ENCODE measurements at regions of chr17 and their contacts with region 1.

Region 1: GRCh38 chr17:66567234-66568170 is 265.1 kb downstream of the PRKCA start:
- DNase-seq: peak; percentile 87
- H3K4me3 Mint-ChIP-seq: no peak overlapping the region
- H3K27ac Mint-ChIP-seq: no peak overlapping the region
- H3K4me1 Mint-ChIP-seq: peaks cover 40% of the 10 kb centered on the region
- H3K27me3 Mint-ChIP-seq: no peaks in the 10 kb centered on the region

Region 2: GRCh38 chr17:66255112-66255511 is 312.4 kb before region 1 on chr17:
- CTCF ChIA-PET with region 1: interaction called, 21 read pairs
- POLR2A ChIA-PET with region 1: no interaction called
- intact Hi-C with region 1: loop called (anchors 1 kb)
- DNase-seq: peak; percentile 28
- H3K4me3 Mint-ChIP-seq: peak overlapping the region; percentile 11
- H3K27ac Mint-ChIP-seq: peak overlapping the region; percentile 24
- H3K4me1 Mint-ChIP-seq: peaks cover 13% of the 10 kb centered on the region
- H3K27me3 Mint-ChIP-seq: no peaks in the 10 kb centered on the region

Region 3: GRCh38 chr17:66426397-66427033 is 141.0 kb before region 1 on chr17:
- CTCF ChIA-PET with region 1: interaction called, 7 read pairs
- POLR2A ChIA-PET with region 1: no interaction called
- intact Hi-C with region 1: loop called (anchors 2 kb)
- DNase-seq: peak; percentile 58
- H3K4me3 Mint-ChIP-seq: peak overlapping the region; percentile 14
- H3K27ac Mint-ChIP-seq: peak overlapping the region; percentile 64
- H3K4me1 Mint-ChIP-seq: peaks cover 75% of the 10 kb centered on the region
- H3K27me3 Mint-ChIP-seq: no peaks in the 10 kb centered on the region

Region 4: GRCh38 chr17:66549731-66550207 is 17.7 kb before region 1 on chr17:
- CTCF ChIA-PET with region 1: interaction called, 7 read pairs
- POLR2A ChIA-PET with region 1: interaction called, 3 read pairs
- intact Hi-C with region 1: loop called (anchors 2 kb)
- DNase-seq: no peak
- H3K4me3 Mint-ChIP-seq: no peak overlapping the region
- H3K27ac Mint-ChIP-seq: no peak overlapping the region
- H3K4me1 Mint-ChIP-seq: peaks cover 56% of the 10 kb centered on the region
- H3K27me3 Mint-ChIP-seq: no peaks in the 10 kb centered on the region

Region 5: GRCh38 chr17:66580184-66580955 is 12.9 kb after region 1 on chr17:
- CTCF ChIA-PET with region 1: no interaction called
- POLR2A ChIA-PET with region 1: no interaction called
- intact Hi-C with region 1: no loop called
- DNase-seq: no peak
- H3K4me3 Mint-ChIP-seq: no peak overlapping the region
- H3K27ac Mint-ChIP-seq: no peak overlapping the region
- H3K4me1 Mint-ChIP-seq: peaks cover 11% of the 10 kb centered on the region
- H3K27me3 Mint-ChIP-seq: no peaks in the 10 kb centered on the region

Measured in activated CD4-positive, alpha-beta memory T cell treated with anti-CD3 and anti-CD28 coated beads for 36 hours (primary cell).